Psoas muscle (tissue), 8 donors: ENCODE measurements at regions of chr3 and their contacts with region 1.

Region 1: DNA sequence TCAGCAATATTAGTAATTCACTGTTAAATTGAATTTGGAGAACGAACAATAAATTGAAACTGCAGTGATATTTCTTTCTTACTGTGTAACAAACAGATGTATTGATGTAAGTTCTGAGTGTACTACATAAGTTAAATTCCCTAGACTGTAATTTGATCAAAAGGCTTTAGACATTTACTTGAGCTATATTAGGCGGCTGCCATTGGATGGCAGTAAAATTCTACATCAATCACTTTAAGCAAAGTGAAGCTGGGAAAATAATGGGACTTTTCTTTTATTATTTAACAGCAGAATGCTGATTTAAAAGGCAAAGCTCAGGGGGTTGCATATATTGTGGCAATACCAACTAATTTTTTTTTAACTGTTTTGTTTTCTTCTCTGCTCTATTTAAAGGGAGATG is 212.6 kb upstream of the PLSCR5 start:
- DNase-seq: no peak
- ATAC-seq: peak in 2 of 4 donors; percentile 43 to 79
- H3K4me3 ChIP-seq: no peak overlapping the region
- H3K27ac ChIP-seq: no peak overlapping the region
- H3K4me1 ChIP-seq: no peaks in the 10 kb centered on the region
- H3K27me3 ChIP-seq: no peaks in the 10 kb centered on the region
- CTCF ChIP-seq: peak; percentile 37

Region 2: DNA sequence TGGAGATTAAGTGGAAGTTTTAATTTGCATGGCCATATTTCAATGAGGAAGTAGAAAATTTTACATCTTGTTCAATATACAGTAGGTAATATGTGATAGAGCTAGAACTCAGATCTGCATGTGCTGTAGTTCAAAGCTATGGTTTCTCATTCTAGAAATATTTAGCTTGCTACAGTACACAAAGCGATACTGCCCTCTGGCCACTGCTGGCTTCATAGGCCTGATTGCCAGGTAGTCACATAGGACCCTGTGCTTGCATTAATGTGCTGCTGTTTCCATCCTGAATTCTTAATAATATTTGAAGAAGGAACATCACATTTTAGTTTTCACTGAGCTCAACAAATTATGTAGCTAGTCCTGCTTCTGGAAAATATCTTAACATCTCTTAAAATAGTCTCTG is 435.3 kb before region 1 on chr3:
- intact Hi-C with region 1: no loop called
- DNase-seq: no peak
- ATAC-seq: no peak
- H3K4me3 ChIP-seq: no peak overlapping the region
- H3K27ac ChIP-seq: no peak overlapping the region
- H3K4me1 ChIP-seq: no peaks in the 10 kb centered on the region
- H3K27me3 ChIP-seq: no peaks in the 10 kb centered on the region
- CTCF ChIP-seq: no peak

Region 3: DNA sequence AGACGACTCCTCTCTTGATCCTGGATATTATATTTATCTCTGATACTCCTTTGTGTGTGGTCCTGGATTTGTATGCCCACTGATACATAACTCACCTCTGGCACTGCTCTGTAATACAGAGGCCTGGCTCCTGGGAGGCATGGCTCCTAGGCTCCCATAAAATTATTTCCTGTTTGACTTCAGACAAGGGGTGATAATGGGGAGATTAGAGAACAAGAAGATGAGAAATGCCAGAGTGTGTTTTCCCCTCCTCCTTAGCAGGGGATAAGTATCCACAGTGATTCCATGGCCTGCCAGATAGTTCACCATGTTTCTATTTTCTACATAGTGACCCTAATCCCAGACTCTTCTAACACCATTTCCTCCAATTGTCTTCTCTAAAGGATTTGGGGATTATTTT is 46.8 kb before region 1 on chr3:
- intact Hi-C with region 1: no loop called
- DNase-seq: no peak
- ATAC-seq: no peak
- H3K4me3 ChIP-seq: no peak overlapping the region
- H3K27ac ChIP-seq: no peak overlapping the region
- H3K4me1 ChIP-seq: no peaks in the 10 kb centered on the region
- H3K27me3 ChIP-seq: no peaks in the 10 kb centered on the region
- CTCF ChIP-seq: no peak

Region 4: GRCh38 chr3:147191795-147192385 is 374.2 kb after region 1 on chr3:
- intact Hi-C with region 1: loop called (anchors 5 kb)
- DNase-seq: no peak
- ATAC-seq: no peak
- H3K4me3 ChIP-seq: no peak overlapping the region
- H3K27ac ChIP-seq: no peak overlapping the region
- H3K4me1 ChIP-seq: no peaks in the 10 kb centered on the region
- H3K27me3 ChIP-seq: no peaks in the 10 kb centered on the region
- CTCF ChIP-seq: peak; percentile 66